ENCODE measurements at regions of chr2 and their contacts with region 1.

Region 1: DNA sequence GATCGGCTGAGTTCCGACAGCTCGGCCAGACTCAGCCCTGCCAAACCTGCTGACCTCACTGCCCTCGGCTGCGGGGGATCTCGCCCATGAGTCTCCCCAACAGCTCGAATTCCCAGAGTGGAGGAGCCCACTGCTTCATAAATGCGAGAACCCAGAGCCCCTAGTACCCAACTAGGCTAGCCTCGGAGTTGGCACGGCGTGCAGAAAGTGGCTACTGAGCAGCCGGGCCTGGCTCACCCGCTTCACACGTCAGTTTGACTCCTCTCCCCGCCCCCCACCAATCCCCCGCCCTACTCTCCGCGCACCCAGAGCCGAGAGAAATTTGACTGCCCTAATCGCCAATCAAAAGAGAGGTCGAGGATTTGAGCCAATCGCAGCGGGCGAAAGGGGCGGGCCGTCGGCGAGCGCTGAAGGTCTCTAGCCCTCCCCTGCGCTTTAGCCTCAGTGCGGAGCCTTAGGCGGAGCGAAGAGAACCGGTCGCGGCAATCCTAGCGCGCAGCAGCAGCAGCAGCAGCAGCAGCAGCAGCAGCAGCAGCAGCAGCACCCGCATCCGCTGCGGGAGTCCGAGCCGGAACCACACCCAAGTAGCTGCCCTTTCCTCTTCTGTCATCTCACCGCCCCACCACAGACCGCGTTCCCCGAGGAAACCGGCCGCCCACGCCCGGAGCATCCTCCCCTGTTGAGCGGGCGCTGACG is at the start of gene GLS:
- DNase-seq: peak; percentile 97
- ATAC-seq: peak; percentile 93
- H3K4me3 Mint-ChIP-seq: peak within 1 kb of the TSS; percentile 94
- H3K27ac Mint-ChIP-seq: peak within 1 kb of the TSS; percentile 93
- H3K4me1 Mint-ChIP-seq: peaks cover 42% of the 10 kb centered on the region
- H3K27me3 Mint-ChIP-seq: no peaks in the 10 kb centered on the region; the same call in 1 of the 2 replicates
- CTCF ChIP-seq: no peak
- total RNA-seq, gene GLS: 102 to 115 TPM (median 102 TPM) in 3 replicates

Region 2: GRCh38 chr2:190853531-190854383 is 26.8 kb before region 1 on chr2:
- CTCF ChIA-PET with region 1: interaction called, 12 read pairs
- POLR2A ChIA-PET with region 1: no interaction called
- DNase-seq: no peak
- ATAC-seq: no peak
- H3K4me3 Mint-ChIP-seq: no peak overlapping the region
- H3K27ac Mint-ChIP-seq: no peak overlapping the region
- H3K4me1 Mint-ChIP-seq: peaks cover 21% of the 10 kb centered on the region
- H3K27me3 Mint-ChIP-seq: no peaks in the 10 kb centered on the region; the same call in 1 of the 2 replicates
- CTCF ChIP-seq: no peak

Region 3: GRCh38 chr2:190891372-190891771 is 10.8 kb after region 1 on chr2:
- CTCF ChIA-PET with region 1: interaction called, 3 read pairs
- POLR2A ChIA-PET with region 1: interaction called, 10 read pairs
- DNase-seq: no peak
- ATAC-seq: no peak
- H3K4me3 Mint-ChIP-seq: no peak overlapping the region
- H3K27ac Mint-ChIP-seq: peak overlapping the region; percentile 25
- H3K4me1 Mint-ChIP-seq: peaks cover 35% of the 10 kb centered on the region
- H3K27me3 Mint-ChIP-seq: no peaks in the 10 kb centered on the region
- CTCF ChIP-seq: no peak

Region 4: GRCh38 chr2:190911813-190912212 is 31.3 kb after region 1 on chr2:
- CTCF ChIA-PET with region 1: no interaction called
- POLR2A ChIA-PET with region 1: no interaction called
- DNase-seq: no peak
- ATAC-seq: no peak
- H3K4me3 Mint-ChIP-seq: no peak overlapping the region
- H3K27ac Mint-ChIP-seq: no peak overlapping the region
- H3K4me1 Mint-ChIP-seq: no peaks in the 10 kb centered on the region
- H3K27me3 Mint-ChIP-seq: no peaks in the 10 kb centered on the region
- CTCF ChIP-seq: no peak